ENCODE measurements at regions of chr7 and their contacts with region 1.

Region 1: DNA sequence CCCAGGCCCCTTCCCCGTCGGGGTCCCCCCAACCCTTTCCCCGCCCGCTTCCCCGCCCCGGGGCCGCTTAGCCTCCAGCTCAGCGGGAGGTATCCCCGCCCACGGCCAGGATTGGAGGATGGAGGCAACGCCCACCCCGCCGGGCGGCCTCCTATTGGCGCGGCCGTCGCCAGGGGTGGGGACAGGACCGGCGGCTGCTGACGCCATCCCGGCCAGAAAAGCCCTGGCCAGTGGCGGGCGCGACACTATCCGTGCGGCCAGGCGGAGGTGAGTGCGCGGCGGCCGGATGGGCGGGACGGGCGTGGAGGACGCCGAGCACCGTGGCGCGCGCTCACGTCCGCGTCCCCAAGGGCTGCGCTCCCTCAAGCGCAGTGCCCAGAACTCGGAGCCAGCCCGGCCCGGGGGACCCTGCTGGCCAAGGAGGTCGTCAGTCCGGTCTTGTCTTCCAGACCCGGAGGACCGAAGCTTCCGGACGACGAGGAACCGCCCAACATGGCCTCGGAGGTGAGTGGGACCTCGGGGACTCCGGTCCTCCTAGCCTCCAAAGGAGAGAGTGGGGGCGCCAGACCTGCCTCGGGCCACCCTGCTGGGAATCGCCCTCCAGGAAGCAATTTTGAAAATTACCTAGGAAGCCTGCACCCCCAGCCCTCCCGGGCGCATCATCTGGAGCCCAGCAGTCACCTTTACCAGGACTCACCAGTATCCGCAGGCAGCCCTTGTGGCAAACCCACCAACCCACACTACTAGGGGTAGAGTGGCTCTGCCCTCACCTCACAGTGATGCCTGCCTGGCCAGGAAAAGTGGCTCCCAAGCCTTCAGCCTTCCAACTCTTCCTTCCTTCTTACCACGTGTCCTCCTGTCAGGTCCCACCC is at the start of gene ASL:
- DNase-seq: peak; percentile 92 to 96
- H3K4me3 ChIP-seq: peak within 1 kb of the TSS; percentile 87 to 93
- H3K27ac ChIP-seq: peak within 1 kb of the TSS; percentile 78 to 82
- H3K4me1 ChIP-seq: peaks cover 0 to 21% (median 13%) of the 10 kb centered on the region in 4 donors
- H3K27me3 ChIP-seq: no peaks in the 10 kb centered on the region
- CTCF ChIP-seq: peak in 1 of 2 experiments; percentile 8

Region 2: GRCh38 chr7:65809259-65809981 is 266.4 kb before region 1 on chr7:
- intact Hi-C with region 1: no loop called
- DNase-seq: no peak
- H3K4me3 ChIP-seq: no peak overlapping the region
- H3K27ac ChIP-seq: no peak overlapping the region
- H3K4me1 ChIP-seq: no peaks in the 10 kb centered on the region
- H3K27me3 ChIP-seq: no peaks in the 10 kb centered on the region
- CTCF ChIP-seq: no peak

Region 3: DNA sequence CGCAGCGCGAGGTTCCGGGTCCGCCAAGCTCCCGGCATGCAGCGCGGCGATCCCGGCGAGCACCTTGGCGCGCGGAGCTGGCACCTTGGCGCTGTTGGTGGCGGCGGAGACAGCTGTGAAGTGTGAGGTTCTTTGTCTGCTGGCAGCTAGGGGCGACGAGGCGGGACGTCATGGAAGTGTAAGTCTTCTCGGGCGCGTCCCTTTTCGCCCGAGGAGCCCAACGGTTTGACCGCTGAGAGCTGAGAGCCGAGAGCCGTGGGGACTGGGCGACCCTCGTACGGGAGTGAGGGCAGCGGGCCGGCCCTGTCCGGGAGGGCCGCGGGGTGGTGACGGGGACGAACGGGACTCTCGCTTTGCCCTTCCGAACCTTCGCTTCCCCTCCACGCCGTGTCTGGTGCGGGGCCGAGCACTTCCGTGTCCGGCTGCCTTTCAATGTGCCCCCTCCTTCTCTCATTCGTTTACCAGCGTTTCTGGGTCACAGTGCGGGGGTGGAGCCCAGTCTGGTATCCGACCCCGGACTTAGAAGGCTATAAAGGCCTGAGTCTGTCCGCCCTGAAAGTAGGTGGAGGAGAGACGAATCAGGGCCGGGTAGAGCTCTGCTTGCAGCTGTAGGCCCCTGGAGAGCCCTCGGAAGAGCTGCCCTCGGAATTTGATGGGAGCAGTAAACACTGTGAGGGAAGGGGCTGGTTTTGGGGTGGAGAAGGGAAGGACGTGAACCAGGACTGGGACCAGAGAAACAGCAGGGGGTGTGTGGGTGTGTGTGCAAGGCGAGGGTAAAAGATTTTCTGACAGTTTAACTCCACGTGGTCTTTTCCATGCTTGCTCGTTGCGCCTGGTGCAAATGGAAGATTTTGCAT is 39.2 kb after region 1 on chr7 and contains the start of gene CRCP:
- intact Hi-C with region 1: loop called (anchors 5 kb)
- DNase-seq: peak; percentile 84 to 88
- H3K4me3 ChIP-seq: peak within 1 kb of the TSS; percentile 86 to 98
- H3K27ac ChIP-seq: peak within 1 kb of the TSS; percentile 98
- H3K4me1 ChIP-seq: peaks cover 0 to 43% (median 21%) of the 10 kb centered on the region in 4 donors
- H3K27me3 ChIP-seq: no peaks in the 10 kb centered on the region
- CTCF ChIP-seq: peak; percentile 11 to 20